CD8-positive, alpha-beta T cell (primary cell): ENCODE measurements at regions of chr13 and their contacts with region 1.

Region 1: GRCh38 chr13:41075034-41075433 is 13.7 kb downstream of the WBP4 start:
- DNase-seq: peak in 5 of 9 experiments; percentile 23 to 70 (median 49)
- ATAC-seq: peak; percentile 63
- H3K4me3 ChIP-seq: no peak overlapping the region
- H3K4me3 Mint-ChIP-seq: no peak overlapping the region
- H3K27ac ChIP-seq: no peak overlapping the region
- H3K27ac Mint-ChIP-seq: no peak overlapping the region
- H3K4me1 ChIP-seq: no peaks in the 10 kb centered on the region
- H3K4me1 Mint-ChIP-seq: no peaks in the 10 kb centered on the region
- H3K27me3 ChIP-seq: no peaks in the 10 kb centered on the region
- H3K27me3 Mint-ChIP-seq: no peaks in the 10 kb centered on the region
- CTCF ChIP-seq: peak; percentile 72

Region 2: GRCh38 chr13:41098761-41099160 is 23.7 kb after region 1 on chr13:
- CTCF ChIA-PET with region 1: no interaction called
- POLR2A ChIA-PET with region 1: no interaction called
- intact Hi-C with region 1: no loop called
- DNase-seq: no peak
- ATAC-seq: no peak
- H3K4me3 ChIP-seq: no peak overlapping the region
- H3K4me3 Mint-ChIP-seq: no peak overlapping the region
- H3K27ac ChIP-seq: no peak overlapping the region
- H3K27ac Mint-ChIP-seq: no peak overlapping the region
- H3K4me1 ChIP-seq: no peaks in the 10 kb centered on the region
- H3K4me1 Mint-ChIP-seq: peaks cover 2% of the 10 kb centered on the region
- H3K27me3 ChIP-seq: no peaks in the 10 kb centered on the region
- H3K27me3 Mint-ChIP-seq: no peaks in the 10 kb centered on the region
- CTCF ChIP-seq: no peak

Region 3: DNA sequence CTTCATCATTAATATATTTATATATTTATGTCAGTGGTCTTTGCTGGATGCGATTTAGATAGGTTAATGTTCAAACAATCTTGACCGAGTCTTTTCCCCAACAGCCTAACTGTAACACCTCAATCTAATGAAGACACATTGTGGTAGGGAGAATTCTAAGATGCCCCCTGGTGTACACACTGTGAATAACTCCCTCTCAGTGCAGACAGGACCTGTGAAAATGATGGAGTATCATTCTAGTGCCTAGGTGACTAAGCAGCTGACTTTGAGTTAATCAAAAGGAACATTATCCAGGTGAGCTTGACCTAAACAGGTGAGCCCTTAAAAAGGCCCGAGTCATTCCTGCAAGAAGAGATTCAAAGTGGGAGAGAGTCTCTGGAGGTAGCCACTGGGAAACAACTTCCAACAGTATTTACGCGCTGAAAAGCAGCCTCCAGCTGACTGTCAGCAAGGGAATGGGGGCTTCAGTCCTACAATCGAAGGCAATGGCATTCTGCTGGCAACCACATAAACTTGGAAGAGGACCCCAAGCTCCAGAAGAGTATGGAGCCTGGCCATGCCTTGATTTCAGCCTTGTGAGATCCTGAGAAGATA is 147.3 kb after region 1 on chr13:
- CTCF ChIA-PET with region 1: interaction called, 11 read pairs
- POLR2A ChIA-PET with region 1: no interaction called
- intact Hi-C with region 1: loop called (anchors 1 kb)
- DNase-seq: peak; percentile 9 to 70 (median 46)
- ATAC-seq: peak; percentile 98
- H3K4me3 ChIP-seq: no peak overlapping the region
- H3K4me3 Mint-ChIP-seq: no peak overlapping the region
- H3K27ac ChIP-seq: no peak overlapping the region
- H3K27ac Mint-ChIP-seq: no peak overlapping the region
- H3K4me1 ChIP-seq: no peaks in the 10 kb centered on the region
- H3K4me1 Mint-ChIP-seq: peaks cover 3% of the 10 kb centered on the region
- H3K27me3 ChIP-seq: no peaks in the 10 kb centered on the region
- H3K27me3 Mint-ChIP-seq: no peaks in the 10 kb centered on the region
- CTCF ChIP-seq: peak; percentile 78

Region 4: DNA sequence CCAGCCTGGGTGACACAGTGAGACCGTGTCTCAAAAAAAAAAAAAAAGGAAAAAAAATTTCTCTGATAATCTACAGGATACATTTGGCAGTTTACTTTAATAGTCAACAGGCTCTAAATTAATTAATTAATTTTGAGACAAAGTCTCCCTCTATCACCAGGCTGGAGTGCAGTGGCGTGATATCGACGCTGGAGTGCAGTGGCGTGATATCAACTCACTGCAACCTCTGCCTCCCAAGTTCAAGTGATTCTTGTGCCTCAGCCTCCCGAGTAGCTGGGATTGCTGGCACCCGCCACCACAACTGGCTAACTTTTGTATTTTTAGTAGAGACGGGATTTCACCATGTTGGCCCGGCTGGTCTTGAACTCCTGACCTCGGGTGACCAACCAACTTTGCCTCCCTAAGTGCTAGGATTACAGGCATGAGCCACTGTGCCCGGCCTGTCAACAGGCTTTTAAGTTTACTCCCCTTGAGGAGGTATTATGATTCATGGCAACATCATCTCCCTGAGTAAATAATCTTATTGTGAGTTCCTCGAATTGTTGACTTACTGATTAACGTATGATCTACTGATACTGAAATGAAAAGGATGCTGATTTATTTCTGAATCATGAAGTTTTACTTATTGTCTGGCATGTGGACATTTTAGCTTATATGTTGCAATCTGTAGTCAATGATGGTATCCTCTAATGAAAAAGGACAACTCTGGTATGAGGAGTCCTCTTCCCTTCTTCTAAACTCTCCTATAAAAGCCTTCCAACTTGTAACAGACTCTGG is 209.7 kb after region 1 on chr13:
- CTCF ChIA-PET with region 1: no interaction called
- POLR2A ChIA-PET with region 1: no interaction called
- intact Hi-C with region 1: no loop called
- DNase-seq: no peak
- ATAC-seq: no peak
- H3K4me3 ChIP-seq: no peak overlapping the region
- H3K4me3 Mint-ChIP-seq: no peak overlapping the region
- H3K27ac ChIP-seq: no peak overlapping the region
- H3K27ac Mint-ChIP-seq: peak overlapping the region; percentile 88
- H3K4me1 ChIP-seq: peaks cover 32% of the 10 kb centered on the region
- H3K4me1 Mint-ChIP-seq: peaks cover 50% of the 10 kb centered on the region
- H3K27me3 ChIP-seq: no peaks in the 10 kb centered on the region
- H3K27me3 Mint-ChIP-seq: no peaks in the 10 kb centered on the region
- CTCF ChIP-seq: no peak